ENCODE measurements at regions of chr14 and their contacts with region 1.

Region 1: GRCh38 chr14:103126493-103127304 is 3.4 kb downstream of the TNFAIP2 start:
- DNase-seq: peak; percentile 73
- H3K4me3 ChIP-seq: peak overlapping the region in 3 of 4 donors; percentile 28 to 45 (median 41)
- H3K27ac ChIP-seq: peak overlapping the region; percentile 30 to 44 (median 34)
- H3K4me1 ChIP-seq: peaks cover 0 to 90% (median 74%) of the 10 kb centered on the region in 4 donors
- H3K27me3 ChIP-seq: peaks cover 0 to 22% (median 3%) of the 10 kb centered on the region in 3 donors
- CTCF ChIP-seq: no peak
- EP300 ChIP-seq: no peak
- POLR2A ChIP-seq: no peak

Region 2: DNA sequence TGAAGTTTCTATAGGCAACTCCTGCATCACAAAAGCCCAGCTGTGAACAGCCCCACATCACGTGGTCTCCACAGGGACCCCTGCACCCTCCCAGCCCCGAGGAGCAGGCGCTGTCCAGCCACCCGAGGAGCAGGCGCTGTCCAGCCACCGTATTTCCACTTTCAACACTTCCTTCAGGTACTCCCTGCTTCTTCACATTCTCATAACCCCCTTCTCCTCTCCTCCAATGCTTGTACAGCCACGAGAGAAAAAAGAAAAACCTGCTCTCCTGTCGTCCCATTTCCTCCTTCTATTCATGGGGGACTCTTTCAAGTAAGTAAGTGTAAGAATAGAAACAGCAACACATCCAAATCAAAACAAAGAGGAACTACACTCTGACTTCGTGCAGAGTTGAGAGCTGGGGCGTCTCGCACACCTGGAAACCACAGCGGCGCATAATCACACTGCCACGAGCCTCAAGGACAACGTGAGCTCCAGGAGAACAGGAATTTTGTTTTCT is 81.3 kb before region 1 on chr14:
- intact Hi-C with region 1: no loop called
- DNase-seq: no peak
- H3K4me3 ChIP-seq: no peak overlapping the region
- H3K27ac ChIP-seq: no peak overlapping the region
- H3K4me1 ChIP-seq: peaks cover 0 to 27% (median 20%) of the 10 kb centered on the region in 4 donors
- H3K27me3 ChIP-seq: no peaks in the 10 kb centered on the region
- CTCF ChIP-seq: no peak
- EP300 ChIP-seq: no peak
- POLR2A ChIP-seq: no peak

Region 3: DNA sequence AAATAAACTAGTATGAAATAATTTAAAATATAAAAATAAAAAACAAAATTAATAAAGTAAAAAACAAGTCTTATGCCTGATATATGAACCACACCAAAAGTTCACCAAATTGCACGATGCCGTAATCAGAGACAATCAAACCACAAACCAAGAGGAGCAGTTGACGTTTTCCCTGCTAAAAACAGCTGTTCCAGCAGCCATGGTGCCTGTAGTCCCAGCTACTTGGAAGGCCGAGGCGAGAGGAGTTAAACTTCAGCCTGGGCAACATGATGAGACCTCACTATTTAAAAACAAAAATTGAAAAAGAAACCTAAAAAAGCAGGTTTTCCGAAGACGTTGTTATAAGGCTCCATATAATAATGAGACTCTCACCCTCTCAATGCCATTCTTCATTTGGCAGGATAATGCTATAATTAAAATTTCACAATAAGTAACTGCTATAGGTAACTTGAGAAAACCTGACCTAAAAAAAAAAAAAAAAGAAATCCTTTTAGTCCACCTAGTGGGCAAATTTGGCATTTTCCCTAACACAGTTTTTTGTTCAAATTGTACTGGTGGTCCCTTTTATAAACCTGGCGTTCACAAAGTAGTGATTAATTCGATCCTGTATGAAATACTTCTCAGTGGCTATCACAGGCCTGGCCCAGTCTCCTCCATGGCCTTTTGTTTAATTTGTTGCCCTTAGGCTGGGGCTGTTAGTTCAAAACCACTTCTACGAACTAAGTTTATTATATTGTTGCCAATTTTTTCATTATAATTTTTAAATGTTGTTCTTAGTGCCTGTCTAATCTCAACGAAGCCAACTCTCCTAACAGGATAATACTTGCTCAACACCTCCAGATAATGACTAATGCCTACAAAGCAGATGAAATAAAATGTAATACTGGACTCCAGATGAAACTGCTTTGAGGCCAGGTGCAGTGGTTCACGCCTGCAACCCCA is 58.6 kb after region 1 on chr14:
- intact Hi-C with region 1: loop called (anchors 5 kb)
- DNase-seq: peak; percentile 41
- H3K4me3 ChIP-seq: no peak overlapping the region
- H3K27ac ChIP-seq: peak overlapping the region in 2 of 4 donors; percentile 28 to 37
- H3K4me1 ChIP-seq: peaks cover 0 to 11% (median 9%) of the 10 kb centered on the region in 4 donors
- H3K27me3 ChIP-seq: peaks cover 7 to 36% (median 11%) of the 10 kb centered on the region in 3 donors
- CTCF ChIP-seq: peak in 3 of 4 experiments; percentile 58 to 67 (median 61)
- EP300 ChIP-seq: no peak
- POLR2A ChIP-seq: no peak

Measured in sigmoid colon (tissue), 7 donors.